Astrocyte of the cerebellum (primary cell): ENCODE measurements at regions of chr4 and their contacts with region 1.

Region 1: DNA sequence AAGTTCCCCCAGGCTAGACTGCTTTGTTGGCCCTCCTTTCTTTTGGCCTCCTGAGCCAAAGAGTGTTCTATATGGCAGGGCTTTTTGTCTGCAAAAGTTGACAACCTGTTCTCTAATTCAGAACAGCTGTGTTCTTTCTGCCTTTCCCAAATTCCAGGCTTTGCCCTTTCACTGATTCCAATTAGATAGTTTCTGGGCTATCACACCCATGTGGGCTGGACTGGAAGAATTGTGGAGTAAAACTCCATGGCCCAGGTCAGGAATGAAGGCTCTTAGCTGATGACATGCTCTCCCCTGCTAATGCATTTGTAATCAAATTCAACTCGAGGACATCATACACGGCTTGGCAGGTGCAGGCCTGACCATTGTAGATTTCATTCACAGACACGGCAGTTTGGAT is 19.4 kb downstream of the BMP3 start:
- DNase-seq: no peak
- H3K4me3 ChIP-seq: no peak overlapping the region
- CTCF ChIP-seq: no peak

Region 2: DNA sequence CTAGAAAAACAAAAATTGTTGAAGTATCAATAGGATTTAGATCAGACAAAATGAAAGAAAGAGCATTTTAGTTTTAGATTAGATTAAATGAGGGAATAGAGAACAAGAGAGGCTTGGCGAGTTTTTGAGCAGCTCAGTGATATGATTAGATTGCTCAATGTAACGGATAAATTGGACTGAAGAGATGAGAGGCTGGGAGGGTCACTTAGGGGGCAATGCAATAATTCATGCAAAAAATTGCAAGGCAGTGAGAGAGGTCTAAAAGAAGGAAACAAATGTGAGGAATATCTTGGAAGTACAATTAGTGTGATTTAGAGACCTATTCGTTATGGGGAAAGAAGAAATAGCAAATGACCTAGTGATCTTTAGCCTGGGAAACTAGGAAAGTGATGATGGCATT is 69.7 kb before region 1 on chr4:
- in situ Hi-C with region 1: loop called (anchors 5 kb)
- DNase-seq: no peak
- H3K4me3 ChIP-seq: no peak overlapping the region
- CTCF ChIP-seq: no peak